Thyroid gland (tissue), 4 donors: ENCODE measurements at regions of chr17 and their contacts with region 1.

Region 1: GRCh38 chr17:49575579-49576087 is at the start of gene NXPH3:
- DNase-seq: peak; percentile 62 to 68
- H3K4me3 ChIP-seq: peak within 1 kb of the TSS in 2 of 3 donors; percentile 5 to 59
- H3K27ac ChIP-seq: peak within 1 kb of the TSS in 2 of 3 donors; percentile 46 to 60
- H3K4me1 ChIP-seq: peaks cover 9 to 22% of the 10 kb centered on the region in 2 donors
- H3K27me3 ChIP-seq: no peaks in the 10 kb centered on the region
- CTCF ChIP-seq: peak in 3 of 6 experiments; percentile 64 to 84 (median 82)
- POLR2A ChIP-seq: no peak
- total RNA-seq, gene NXPH3: 1.0 to 5.1 (median 1.2) TPM

Region 2: GRCh38 chr17:49523706-49524472 is 51.7 kb before region 1 on chr17:
- intact Hi-C with region 1: no loop called
- DNase-seq: peak; percentile 30 to 37
- H3K4me3 ChIP-seq: no peak overlapping the region
- H3K27ac ChIP-seq: no peak overlapping the region
- H3K4me1 ChIP-seq: peaks cover 0 to 10% of the 10 kb centered on the region in 2 donors
- H3K27me3 ChIP-seq: no peaks in the 10 kb centered on the region
- CTCF ChIP-seq: no peak
- POLR2A ChIP-seq: no peak

Region 3: DNA sequence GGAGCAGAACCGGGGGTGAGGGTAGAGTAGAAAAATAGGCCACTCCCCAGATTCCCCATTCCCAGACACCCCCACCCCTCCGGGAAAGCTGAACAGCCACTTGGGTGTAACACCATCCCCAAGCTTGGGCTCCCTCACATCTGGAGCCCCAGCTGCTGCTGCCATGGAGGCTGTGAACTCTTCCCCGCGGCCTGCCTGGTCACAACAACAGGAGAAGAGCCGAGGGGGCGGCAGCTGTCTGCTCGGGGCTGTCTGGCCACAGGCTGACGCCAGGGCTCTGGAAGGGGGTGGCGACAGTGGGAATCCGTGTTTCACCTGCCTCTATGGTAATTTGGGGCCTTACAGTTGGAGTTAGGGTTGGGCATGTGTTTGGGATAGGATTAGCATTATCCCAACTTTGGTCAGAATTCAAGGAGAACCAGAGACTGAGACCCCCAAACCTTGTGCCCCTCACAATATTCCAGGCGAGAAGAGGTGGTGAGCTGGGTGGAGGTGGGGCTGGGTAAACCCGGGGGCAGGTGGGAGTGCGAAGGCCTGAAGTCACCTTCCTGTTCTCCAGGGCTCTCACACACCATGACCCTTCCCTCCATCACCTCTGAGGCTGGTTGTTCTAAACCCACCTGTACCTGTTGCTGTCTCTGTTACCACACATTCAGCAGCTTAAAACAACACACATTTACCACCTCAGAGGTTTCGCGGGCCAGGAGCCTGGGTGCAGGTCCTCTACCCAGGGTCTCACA is 29.7 kb before region 1 on chr17:
- intact Hi-C with region 1: no loop called
- DNase-seq: no peak
- H3K4me3 ChIP-seq: no peak overlapping the region
- H3K27ac ChIP-seq: no peak overlapping the region
- H3K4me1 ChIP-seq: no peaks in the 10 kb centered on the region
- H3K27me3 ChIP-seq: no peaks in the 10 kb centered on the region
- CTCF ChIP-seq: no peak
- POLR2A ChIP-seq: no peak

Region 4: GRCh38 chr17:49556223-49556971 is 19.2 kb before region 1 on chr17:
- intact Hi-C with region 1: no loop called
- DNase-seq: peak; percentile 76 to 77
- H3K4me3 ChIP-seq: no peak overlapping the region
- H3K27ac ChIP-seq: no peak overlapping the region
- H3K4me1 ChIP-seq: peaks cover 17 to 21% of the 10 kb centered on the region in 2 donors
- H3K27me3 ChIP-seq: no peaks in the 10 kb centered on the region
- CTCF ChIP-seq: peak; percentile 81 to 98 (median 94)
- POLR2A ChIP-seq: no peak

Region 5: GRCh38 chr17:49779739-49780231 is 204.2 kb after region 1 on chr17:
- intact Hi-C with region 1: loop called (anchors 5 kb)
- DNase-seq: peak; percentile 49 to 53
- H3K4me3 ChIP-seq: no peak overlapping the region
- H3K27ac ChIP-seq: peak overlapping the region in 1 of 3 donors; percentile 43
- H3K4me1 ChIP-seq: peaks cover 16 to 30% of the 10 kb centered on the region in 2 donors
- H3K27me3 ChIP-seq: no peaks in the 10 kb centered on the region
- CTCF ChIP-seq: peak in 5 of 6 experiments; percentile 32 to 74 (median 63)
- POLR2A ChIP-seq: no peak

Region 6: DNA sequence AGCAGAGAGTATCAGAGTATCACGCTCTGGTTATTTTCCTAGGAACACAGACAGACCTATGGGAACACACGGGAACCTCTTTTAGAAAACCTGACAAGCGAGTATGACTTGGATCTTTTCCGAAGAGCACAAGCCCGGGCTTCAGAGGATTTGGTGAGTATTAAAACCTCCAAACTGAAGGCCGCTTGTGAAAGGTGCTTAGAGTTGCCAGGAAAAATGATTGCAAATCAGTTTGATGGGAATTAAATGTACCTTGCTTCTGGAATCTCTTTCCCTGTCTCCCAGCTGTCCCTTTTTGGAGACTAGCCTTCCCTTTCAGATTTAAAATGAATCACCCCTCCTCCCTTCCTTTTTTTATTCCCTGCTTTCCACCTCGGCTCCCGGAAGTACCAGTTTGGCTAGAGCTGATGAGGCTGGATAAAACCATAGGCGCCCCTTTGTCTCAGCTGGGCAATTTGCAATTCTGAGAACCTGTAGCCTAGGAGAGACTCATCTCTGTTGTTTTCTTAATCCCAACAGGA is 240.2 kb after region 1 on chr17:
- intact Hi-C with region 1: no loop called
- DNase-seq: peak; percentile 61 to 62
- H3K4me3 ChIP-seq: no peak overlapping the region
- H3K27ac ChIP-seq: peak overlapping the region; percentile 70 to 86 (median 86)
- H3K4me1 ChIP-seq: peaks cover 43 to 47% of the 10 kb centered on the region in 2 donors
- H3K27me3 ChIP-seq: no peaks in the 10 kb centered on the region
- CTCF ChIP-seq: no peak
- POLR2A ChIP-seq: no peak

Region 7: DNA sequence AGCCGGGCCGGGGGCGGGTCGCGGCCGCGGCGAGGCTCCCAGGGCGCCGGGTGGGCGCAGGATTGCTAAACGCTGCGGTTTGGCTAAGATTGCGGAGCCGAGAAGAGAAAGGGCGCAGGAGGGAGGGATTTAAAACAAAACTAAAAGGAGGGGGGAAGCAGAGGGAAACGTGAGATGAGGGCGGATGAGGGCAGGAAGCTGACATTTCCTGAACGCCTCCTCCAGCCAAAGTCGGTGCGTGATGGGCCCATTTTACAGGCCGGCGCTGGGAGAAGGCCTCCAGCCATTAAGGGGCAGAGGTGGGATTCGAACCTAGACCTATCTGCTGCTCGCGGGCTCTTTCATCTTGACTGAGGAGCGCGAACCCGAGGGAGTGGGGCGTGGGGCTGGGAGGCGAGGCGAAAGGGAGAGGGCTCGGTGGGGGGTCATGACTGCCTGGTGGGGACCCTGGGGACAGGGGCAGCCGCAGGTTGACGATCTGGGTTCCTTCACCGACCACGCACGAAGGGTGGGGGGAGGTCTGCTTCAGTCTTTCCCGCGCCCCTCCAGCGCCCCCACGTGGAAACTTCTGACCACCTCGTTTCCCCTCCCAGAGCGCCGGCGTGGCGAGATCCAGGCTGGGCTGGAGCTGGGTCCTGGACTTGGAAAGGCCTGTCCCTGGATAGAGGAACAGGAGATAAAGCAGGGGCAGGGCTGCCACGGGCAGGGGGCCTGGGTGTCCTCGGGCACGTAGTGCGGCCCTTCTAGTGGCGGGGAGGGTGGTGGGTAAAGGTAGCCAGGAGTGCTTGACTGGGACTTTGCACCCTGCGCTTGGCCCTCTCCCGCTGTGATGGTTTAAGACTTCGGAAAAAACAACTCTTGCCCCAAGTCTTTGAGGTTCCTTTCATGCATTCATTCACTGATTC is 276.0 kb after region 1 on chr17:
- intact Hi-C with region 1: loop called (anchors 5 kb)
- DNase-seq: peak; percentile 77 to 79
- H3K4me3 ChIP-seq: peak overlapping the region in 2 of 3 donors; percentile 10 to 56
- H3K27ac ChIP-seq: peak overlapping the region in 1 of 3 donors; percentile 8
- H3K4me1 ChIP-seq: peaks cover 3 to 9% of the 10 kb centered on the region in 2 donors
- H3K27me3 ChIP-seq: no peaks in the 10 kb centered on the region
- CTCF ChIP-seq: peak in 5 of 6 experiments; percentile 47 to 79 (median 71)
- POLR2A ChIP-seq: peak in 1 of 2 donors; percentile 1